ENCODE measurements at regions of chr7 and their contacts with region 1.

Region 1: DNA sequence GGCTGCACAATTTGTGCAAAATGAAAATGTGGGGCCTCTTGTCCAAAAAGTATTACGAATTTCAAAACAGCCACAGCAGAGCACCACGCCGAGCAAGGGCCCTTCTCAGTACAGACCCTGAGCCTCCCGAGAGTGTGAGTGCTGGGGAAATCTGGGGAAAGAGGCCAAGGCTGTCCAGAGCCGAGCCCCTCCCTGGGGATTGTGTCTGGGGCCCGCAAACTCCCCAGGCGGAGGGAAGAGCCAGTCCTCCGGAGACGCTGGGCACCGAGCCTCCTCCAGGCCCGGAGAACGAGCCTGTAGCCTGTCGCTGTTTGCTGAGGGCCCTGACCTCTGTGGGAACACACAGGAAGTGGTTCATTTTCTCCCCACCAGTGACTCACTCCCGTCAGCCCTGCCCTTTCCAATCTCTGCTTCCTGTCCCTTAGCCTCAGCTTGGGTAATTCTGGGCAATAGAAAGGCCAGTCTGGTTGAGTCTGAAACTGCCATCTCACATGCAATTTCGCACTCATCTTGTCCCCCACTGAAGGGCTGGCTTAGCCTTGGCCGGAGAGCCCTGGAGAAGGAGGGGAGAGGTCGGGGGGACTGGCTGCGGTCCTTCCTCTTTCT is 19.5 kb upstream of the GNA12 start:
- DNase-seq: peak in 6 of 9 donors; percentile 19 to 77 (median 31)
- ATAC-seq: peak; percentile 94
- H3K4me3 ChIP-seq: peak overlapping the region; percentile 14
- H3K4me3 Mint-ChIP-seq: peak overlapping the region in 9 of 10 donors; percentile 41 to 81 (median 68)
- H3K27ac ChIP-seq: peak overlapping the region; percentile 44
- H3K27ac Mint-ChIP-seq: peak overlapping the region; percentile 65 to 96 (median 88)
- H3K4me1 ChIP-seq: peaks cover 7 to 19% of the 10 kb centered on the region in 2 donors
- H3K4me1 Mint-ChIP-seq: peaks cover 12 to 29% (median 19%) of the 10 kb centered on the region in 7 donors
- H3K27me3 ChIP-seq: no peaks in the 10 kb centered on the region
- H3K27me3 Mint-ChIP-seq: no peaks in the 10 kb centered on the region

Region 2: DNA sequence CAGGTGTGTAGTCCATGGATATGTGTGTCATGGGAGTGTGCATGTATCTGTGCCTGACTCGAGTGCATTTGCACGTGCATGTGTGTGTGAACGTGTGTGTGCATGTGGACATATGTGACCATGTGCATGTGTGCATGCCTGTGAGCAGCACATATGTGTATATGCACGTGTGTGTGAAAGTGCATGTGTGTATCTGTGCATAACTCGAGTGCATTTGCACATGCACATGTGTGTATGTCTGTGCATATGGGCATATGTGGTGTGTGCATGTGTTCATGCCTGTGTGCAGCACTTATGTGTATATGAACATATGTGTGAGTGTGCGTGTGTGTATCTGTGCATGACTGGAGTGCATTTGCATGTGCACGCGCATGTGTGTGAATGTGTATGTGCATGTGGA is 15.8 kb after region 1 on chr7:
- CTCF ChIA-PET with region 1: interaction called, 3 read pairs
- POLR2A ChIA-PET with region 1: no interaction called
- intact Hi-C with region 1: loop called in 1 of 2 experiments (anchors 1 kb)
- DNase-seq: no peak
- ATAC-seq: no peak
- H3K4me3 ChIP-seq: peak overlapping the region; percentile 4
- H3K4me3 Mint-ChIP-seq: peak overlapping the region; percentile 3 to 82 (median 64)
- H3K27ac ChIP-seq: no peak overlapping the region
- H3K27ac Mint-ChIP-seq: peak overlapping the region in 7 of 9 donors; percentile 29 to 84 (median 72)
- H3K4me1 ChIP-seq: peaks cover 10 to 17% of the 10 kb centered on the region in 2 donors
- H3K4me1 Mint-ChIP-seq: peaks cover 15 to 45% (median 39%) of the 10 kb centered on the region in 7 donors
- H3K27me3 ChIP-seq: no peaks in the 10 kb centered on the region
- H3K27me3 Mint-ChIP-seq: no peaks in the 10 kb centered on the region

Region 3: GRCh38 chr7:3154912-3155494 is 291.4 kb after region 1 on chr7:
- CTCF ChIA-PET with region 1: interaction called, 29 read pairs
- POLR2A ChIA-PET with region 1: no interaction called
- intact Hi-C with region 1: loop called (anchors 1 kb)
- DNase-seq: peak in 8 of 9 donors; percentile 43 to 73 (median 66)
- ATAC-seq: peak; percentile 88
- H3K4me3 ChIP-seq: no peak overlapping the region
- H3K4me3 Mint-ChIP-seq: no peak overlapping the region
- H3K27ac ChIP-seq: no peak overlapping the region
- H3K27ac Mint-ChIP-seq: peak overlapping the region in 5 of 9 donors; percentile 5 to 48 (median 12)
- H3K4me1 ChIP-seq: no peaks in the 10 kb centered on the region
- H3K4me1 Mint-ChIP-seq: peaks cover 6 to 20% (median 14%) of the 10 kb centered on the region in 7 donors
- H3K27me3 ChIP-seq: no peaks in the 10 kb centered on the region
- H3K27me3 Mint-ChIP-seq: no peaks in the 10 kb centered on the region

Region 4: GRCh38 chr7:3300651-3301378 is 437.3 kb after region 1 on chr7 and contains the start of gene SDK1:
- CTCF ChIA-PET with region 1: no interaction called
- POLR2A ChIA-PET with region 1: no interaction called
- intact Hi-C with region 1: loop called (anchors 1 to 5 kb)
- DNase-seq: peak; percentile 84 to 96 (median 93)
- ATAC-seq: peak; percentile 94
- H3K4me3 ChIP-seq: peak within 1 kb of the TSS; percentile 53
- H3K4me3 Mint-ChIP-seq: peak within 1 kb of the TSS; percentile 39 to 94 (median 89)
- H3K27ac ChIP-seq: no peak within 1 kb of the TSS
- H3K27ac Mint-ChIP-seq: peak within 1 kb of the TSS in 6 of 9 donors; percentile 51 to 80 (median 70)
- H3K4me1 ChIP-seq: peaks cover 5 to 7% of the 10 kb centered on the region in 2 donors
- H3K4me1 Mint-ChIP-seq: peaks cover 7 to 26% (median 12%) of the 10 kb centered on the region in 7 donors
- H3K27me3 ChIP-seq: no peaks in the 10 kb centered on the region
- H3K27me3 Mint-ChIP-seq: peaks cover 4 to 55% (median 7%) of the 10 kb centered on the region in 5 donors
- total RNA-seq, gene SDK1: 0.07 to 2.5 (median 0.54) TPM

Region 5: GRCh38 chr7:3673524-3673923 is 810.0 kb after region 1 on chr7:
- CTCF ChIA-PET with region 1: interaction called, 3 read pairs
- POLR2A ChIA-PET with region 1: no interaction called
- intact Hi-C with region 1: loop called in 1 of 2 experiments (anchors 1 kb)
- DNase-seq: peak; percentile 14 to 60 (median 46)
- ATAC-seq: peak; percentile 50
- H3K4me3 ChIP-seq: no peak overlapping the region
- H3K4me3 Mint-ChIP-seq: no peak overlapping the region
- H3K27ac ChIP-seq: no peak overlapping the region
- H3K27ac Mint-ChIP-seq: no peak overlapping the region
- H3K4me1 ChIP-seq: peaks cover 0 to 19% of the 10 kb centered on the region in 2 donors
- H3K4me1 Mint-ChIP-seq: peaks cover 0 to 12% (median 3%) of the 10 kb centered on the region in 7 donors
- H3K27me3 ChIP-seq: no peaks in the 10 kb centered on the region
- H3K27me3 Mint-ChIP-seq: no peaks in the 10 kb centered on the region

Region 6: GRCh38 chr7:4681886-4682620 is 1818.5 kb after region 1 on chr7 and contains the start of gene FOXK1:
- CTCF ChIA-PET with region 1: no interaction called
- POLR2A ChIA-PET with region 1: no interaction called
- intact Hi-C with region 1: loop called in 1 of 2 experiments (anchors 10 kb)
- DNase-seq: peak; percentile 69 to 87 (median 79)
- ATAC-seq: peak; percentile 92
- H3K4me3 ChIP-seq: peak within 1 kb of the TSS; percentile 75
- H3K4me3 Mint-ChIP-seq: peak within 1 kb of the TSS; percentile 90 to 100 (median 97)
- H3K27ac ChIP-seq: peak within 1 kb of the TSS; percentile 92
- H3K27ac Mint-ChIP-seq: peak within 1 kb of the TSS; percentile 68 to 99 (median 97)
- H3K4me1 ChIP-seq: peaks cover 13 to 28% of the 10 kb centered on the region in 2 donors
- H3K4me1 Mint-ChIP-seq: peaks cover 24 to 41% (median 31%) of the 10 kb centered on the region in 7 donors
- H3K27me3 ChIP-seq: no peaks in the 10 kb centered on the region
- H3K27me3 Mint-ChIP-seq: no peaks in the 10 kb centered on the region
- total RNA-seq, gene FOXK1: 37.7 to 69.0 (median 56.9) TPM